MCF 10A (cell line): ENCODE measurements at regions of chr3 and their contacts with region 1.

Region 1: DNA sequence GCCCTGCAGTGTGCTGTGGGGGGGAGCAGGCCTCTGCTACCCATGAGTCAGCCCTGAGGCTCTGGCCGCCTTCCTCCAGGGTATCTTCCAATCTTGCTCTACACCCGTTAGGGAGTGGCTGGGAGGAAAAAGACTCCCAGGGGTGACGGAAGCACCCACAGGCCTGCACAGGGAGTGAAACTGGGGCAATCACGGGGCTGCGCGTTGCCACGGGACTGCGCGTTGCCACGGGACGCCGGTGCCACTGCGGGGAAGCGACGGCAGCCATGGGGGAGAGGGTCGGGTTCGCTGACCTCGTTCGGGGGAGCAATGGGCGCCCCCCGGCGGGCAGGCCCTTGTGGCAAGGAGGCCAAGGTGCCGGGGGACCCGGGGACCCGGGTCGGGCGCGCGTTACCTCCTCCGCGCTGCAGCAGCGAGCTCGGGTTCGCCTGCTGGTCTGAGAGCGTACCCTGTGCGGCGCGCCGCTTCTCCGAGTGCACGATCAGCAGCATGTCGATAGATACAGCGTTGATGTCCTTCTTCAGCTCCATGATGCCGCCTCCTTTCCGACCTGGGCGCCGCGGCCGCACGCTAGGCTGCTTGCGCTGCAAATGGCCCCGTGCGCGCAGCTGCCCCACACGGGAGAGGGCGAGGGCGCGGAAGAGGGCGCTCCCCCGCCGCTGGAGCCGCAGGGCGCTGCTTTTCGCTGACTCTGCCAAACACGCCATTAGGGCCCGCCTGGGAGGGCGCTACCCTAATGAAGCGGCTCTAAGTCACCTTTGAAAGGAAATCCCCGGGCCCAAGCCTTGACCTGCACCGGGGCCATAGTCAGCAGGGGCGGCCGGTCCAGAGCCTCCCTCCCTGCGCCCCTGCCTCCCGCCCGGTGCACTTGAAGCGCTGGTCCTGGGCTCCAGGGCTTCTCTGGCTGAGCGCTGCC is at the start of gene KY:
- DNase-seq: no peak
- H3K4me3 Mint-ChIP-seq: peak within 1 kb of the TSS; percentile 54
- H3K27ac Mint-ChIP-seq: no peak within 1 kb of the TSS
- H3K4me1 Mint-ChIP-seq: no peaks in the 10 kb centered on the region
- H3K27me3 Mint-ChIP-seq: peaks cover 2% of the 10 kb centered on the region
- CTCF ChIP-seq: no peak
- total RNA-seq, gene KY: not detected in 2 replicates

Region 2: DNA sequence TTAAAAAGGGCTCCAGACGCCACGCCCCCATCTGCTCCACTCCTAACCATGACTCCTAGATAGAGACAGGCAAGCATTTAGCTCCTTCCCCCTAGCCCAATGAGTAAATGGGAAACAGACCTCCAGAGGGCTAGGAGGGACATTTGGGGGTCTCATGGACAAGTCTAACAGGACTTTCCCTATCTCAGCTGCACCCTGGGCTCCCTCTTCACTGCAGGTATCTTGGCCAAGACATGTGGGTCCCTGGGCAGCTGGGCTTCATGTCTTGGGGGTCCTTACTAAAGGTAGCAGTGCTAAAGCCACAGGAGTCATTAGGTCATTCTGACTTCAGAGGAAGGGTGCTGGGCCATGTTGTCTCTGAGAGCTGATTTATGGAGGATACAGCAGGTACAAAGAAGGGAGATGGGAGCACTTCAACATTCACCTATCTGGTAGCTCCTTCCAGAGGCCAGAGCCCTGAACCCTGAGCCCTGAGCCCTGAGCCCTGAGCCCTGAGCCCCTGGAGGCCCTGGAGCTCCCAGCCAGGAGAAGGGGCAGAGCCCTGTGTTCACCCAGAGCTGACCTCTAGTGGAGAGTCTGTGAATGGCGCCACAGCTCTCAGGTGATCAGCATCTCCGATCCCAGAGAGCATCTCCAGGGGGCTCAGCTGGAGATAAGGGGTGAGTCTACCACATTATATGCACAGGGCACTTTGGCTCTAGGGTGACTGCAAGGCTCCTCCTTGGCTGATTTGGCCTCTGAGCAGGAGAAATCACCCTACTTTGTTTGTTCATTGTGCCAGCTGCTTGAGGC is 104.3 kb after region 1 on chr3:
- CTCF ChIA-PET with region 1: interaction called, 4 read pairs
- POLR2A ChIA-PET with region 1: no interaction called
- intact Hi-C with region 1: loop called (anchors 10 kb)
- DNase-seq: peak; percentile 64
- H3K4me3 Mint-ChIP-seq: no peak overlapping the region
- H3K27ac Mint-ChIP-seq: no peak overlapping the region
- H3K4me1 Mint-ChIP-seq: no peaks in the 10 kb centered on the region
- H3K27me3 Mint-ChIP-seq: peaks cover 24% of the 10 kb centered on the region
- CTCF ChIP-seq: peak; percentile 68